Astrocyte of the cerebellum (primary cell): ENCODE measurements at regions of chr19 and their contacts with region 1.

Region 1: DNA sequence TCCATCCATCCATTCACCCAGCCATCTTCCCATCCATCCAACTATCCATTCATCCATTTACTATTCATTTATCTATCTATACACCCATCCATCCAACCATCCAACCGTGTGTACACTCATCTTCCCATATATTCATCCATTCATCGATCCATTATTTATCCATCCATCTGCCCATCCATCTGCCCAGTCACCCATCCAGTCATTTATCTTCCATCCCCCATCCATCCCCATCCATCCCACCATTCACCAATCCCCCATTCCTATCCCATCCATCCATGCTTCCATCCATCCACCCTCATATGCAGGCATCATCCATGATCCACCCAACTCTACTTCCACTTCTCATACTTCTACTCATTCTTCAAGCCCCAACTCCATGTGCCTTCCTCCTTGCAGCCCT is 14.0 kb upstream of the HOMER3 start:
- DNase-seq: no peak
- H3K4me3 ChIP-seq: no peak overlapping the region
- CTCF ChIP-seq: no peak

Region 2: GRCh38 chr19:18906605-18907519 is 48.2 kb before region 1 on chr19:
- in situ Hi-C with region 1: no loop called
- DNase-seq: no peak
- H3K4me3 ChIP-seq: no peak overlapping the region
- CTCF ChIP-seq: no peak

Region 3: DNA sequence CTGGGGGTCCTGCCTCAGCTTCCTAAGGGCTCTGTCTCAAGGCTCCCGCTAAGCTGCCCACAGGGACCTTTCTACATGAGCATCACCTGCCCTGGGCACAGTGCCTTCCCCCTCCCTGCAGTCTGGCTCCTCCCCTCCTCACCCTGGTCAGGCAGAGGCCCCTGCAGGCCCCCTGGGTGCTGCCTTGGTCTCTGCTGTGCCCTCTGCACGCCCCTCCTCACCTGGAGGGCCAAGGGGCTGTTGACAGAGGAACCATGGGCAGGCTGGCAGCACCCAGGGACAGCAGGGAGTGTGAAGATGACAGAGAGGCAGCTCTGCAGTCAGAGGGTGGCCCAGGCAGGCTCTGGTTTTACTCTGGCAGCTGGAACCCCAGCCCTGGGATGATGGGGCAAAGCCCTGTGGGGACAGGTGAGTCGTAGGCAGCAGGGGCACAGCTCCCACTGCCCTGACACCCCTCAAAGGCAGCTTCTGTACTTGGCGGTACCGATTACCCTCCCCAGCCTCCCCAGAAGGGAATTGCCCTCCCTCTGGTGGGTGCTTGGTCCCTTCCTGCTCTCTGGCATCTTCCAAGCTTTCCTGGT is 35.2 kb after region 1 on chr19:
- in situ Hi-C with region 1: loop called (anchors 5 kb)
- DNase-seq: no peak
- H3K4me3 ChIP-seq: no peak overlapping the region
- CTCF ChIP-seq: no peak

Region 4: DNA sequence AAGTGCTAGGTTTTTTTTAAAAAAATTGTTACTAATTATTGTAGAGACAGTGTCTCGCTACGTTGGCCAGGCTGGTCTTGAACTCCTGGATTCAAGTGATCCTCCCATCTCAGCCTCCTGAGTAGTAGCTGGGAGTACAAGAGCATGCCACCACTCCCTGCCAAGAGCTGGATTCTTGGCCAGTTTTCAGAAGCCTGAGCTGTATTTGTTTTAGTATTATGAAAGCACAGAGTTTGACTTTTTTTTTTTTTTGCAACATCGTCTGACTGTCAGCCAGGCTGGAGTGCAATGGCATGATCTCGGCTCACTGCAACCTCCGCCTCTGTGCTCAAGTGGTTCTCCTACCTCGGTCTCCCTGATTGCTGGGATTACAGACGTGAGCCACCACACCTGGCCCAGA is 85.4 kb after region 1 on chr19:
- in situ Hi-C with region 1: loop called (anchors 5 kb)
- DNase-seq: peak; percentile 59
- H3K4me3 ChIP-seq: no peak overlapping the region
- CTCF ChIP-seq: no peak